Common myeloid progenitor, CD34-positive (primary cell): ENCODE measurements at regions of chrX and their contacts with region 1.

Region 1: GRCh38 chrX:129726307-129727111 is 12.3 kb upstream of the XPNPEP2 start:
- DNase-seq: peak in 2 of 3 donors; percentile 33 to 38
- H3K4me3 ChIP-seq: no peak overlapping the region
- H3K27ac ChIP-seq: no peak overlapping the region
- H3K4me1 ChIP-seq: peaks cover 0 to 17% (median 1%) of the 10 kb centered on the region in 4 experiments
- H3K27me3 ChIP-seq: no peaks in the 10 kb centered on the region

Region 2: DNA sequence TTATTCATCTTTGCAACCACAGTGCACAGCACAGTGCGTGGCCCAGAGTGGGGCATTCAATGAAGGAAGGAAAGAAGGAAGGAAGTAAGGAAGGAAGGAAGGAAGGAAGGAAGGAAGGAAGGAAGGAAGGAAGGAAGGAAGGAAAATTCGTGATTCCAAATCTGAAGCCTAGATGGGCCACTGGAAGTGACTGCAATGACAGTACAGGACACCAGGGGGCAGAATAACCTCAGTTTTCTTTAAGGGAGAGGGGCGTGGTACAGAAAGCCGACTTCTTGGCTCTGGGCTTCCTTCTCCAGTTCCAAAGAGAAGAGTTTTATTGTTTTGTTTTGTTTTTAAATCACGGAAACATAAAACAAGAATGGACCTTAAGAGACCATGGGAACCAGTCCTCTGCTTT is 119.6 kb before region 1 on chrX:
- CTCF ChIA-PET with region 1: interaction called, 19 read pairs
- POLR2A ChIA-PET with region 1: no interaction called
- DNase-seq: peak; percentile 58 to 87 (median 78)
- H3K4me3 ChIP-seq: no peak overlapping the region
- H3K27ac ChIP-seq: no peak overlapping the region
- H3K4me1 ChIP-seq: peaks cover 0 to 14% (median 12%) of the 10 kb centered on the region in 4 experiments
- H3K27me3 ChIP-seq: no peaks in the 10 kb centered on the region

Region 3: GRCh38 chrX:129637217-129638109 is 89.0 kb before region 1 on chrX:
- CTCF ChIA-PET with region 1: interaction called, 47 read pairs
- POLR2A ChIA-PET with region 1: no interaction called
- DNase-seq: peak; percentile 53 to 76 (median 67)
- H3K4me3 ChIP-seq: no peak overlapping the region
- H3K27ac ChIP-seq: no peak overlapping the region
- H3K4me1 ChIP-seq: peaks cover 0 to 8% (median 2%) of the 10 kb centered on the region in 4 experiments
- H3K27me3 ChIP-seq: no peaks in the 10 kb centered on the region

Region 4: DNA sequence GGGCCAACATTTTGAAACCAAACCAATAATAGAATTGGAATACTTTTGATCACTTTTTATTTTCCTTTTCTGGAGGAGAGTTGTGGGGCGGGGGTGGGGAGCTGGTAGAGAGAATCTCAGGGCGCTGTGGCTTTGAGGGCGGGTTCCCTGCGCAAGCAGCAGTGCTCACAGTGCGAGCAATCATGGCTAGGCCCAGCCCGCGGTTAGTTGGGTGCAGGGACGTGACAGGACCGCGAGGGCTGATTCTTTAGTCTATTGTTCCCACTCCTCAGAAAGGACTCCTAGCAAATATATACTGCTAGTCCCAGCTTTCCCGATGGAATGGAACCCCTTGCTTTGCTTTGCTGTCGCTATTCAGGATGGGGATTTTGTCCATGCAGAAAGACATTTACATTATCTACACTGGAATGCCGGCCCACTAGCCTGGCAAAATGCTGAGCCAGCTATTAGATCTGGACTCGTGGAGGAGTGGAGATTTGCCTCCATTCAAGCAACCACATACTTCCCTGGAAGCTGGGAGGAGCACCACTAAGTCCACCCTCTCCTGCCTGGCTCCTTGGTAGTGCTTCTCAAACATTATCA is 47.8 kb before region 1 on chrX:
- CTCF ChIA-PET with region 1: interaction called, 12 read pairs
- POLR2A ChIA-PET with region 1: no interaction called
- DNase-seq: peak in 2 of 3 donors; percentile 30 to 38
- H3K4me3 ChIP-seq: peak overlapping the region in 6 of 7 experiments; percentile 16 to 70 (median 49)
- H3K27ac ChIP-seq: no peak overlapping the region
- H3K4me1 ChIP-seq: peaks cover 0 to 13% (median 8%) of the 10 kb centered on the region in 4 experiments
- H3K27me3 ChIP-seq: no peaks in the 10 kb centered on the region

Region 5: DNA sequence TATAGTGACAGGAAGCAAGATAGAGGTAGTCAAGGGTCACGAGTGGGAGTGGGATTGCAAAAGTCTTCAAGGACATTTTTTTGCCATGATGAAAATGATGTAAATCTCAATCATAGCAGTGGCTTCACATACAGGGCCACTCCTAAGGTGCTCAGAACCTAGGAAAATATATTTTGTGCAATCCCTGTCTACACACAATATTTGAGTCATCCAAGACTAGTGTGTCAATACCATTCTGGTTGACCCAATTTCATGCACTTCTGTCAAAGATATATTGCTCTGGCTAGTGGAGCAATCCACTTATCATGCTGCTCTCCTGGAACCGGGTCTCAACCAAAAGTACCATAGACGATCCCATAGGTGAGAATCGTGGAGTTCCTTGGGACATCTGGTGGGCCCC is 11.9 kb before region 1 on chrX:
- CTCF ChIA-PET with region 1: interaction called, 12 read pairs
- POLR2A ChIA-PET with region 1: no interaction called
- DNase-seq: no peak
- H3K4me3 ChIP-seq: no peak overlapping the region
- H3K27ac ChIP-seq: no peak overlapping the region
- H3K4me1 ChIP-seq: no peaks in the 10 kb centered on the region
- H3K27me3 ChIP-seq: no peaks in the 10 kb centered on the region

Region 6: GRCh38 chrX:129737916-129738315 is 11.4 kb after region 1 on chrX:
- CTCF ChIA-PET with region 1: interaction called, 12 read pairs
- POLR2A ChIA-PET with region 1: no interaction called
- DNase-seq: peak in 2 of 3 donors; percentile 46 to 52
- H3K4me3 ChIP-seq: no peak overlapping the region
- H3K27ac ChIP-seq: no peak overlapping the region
- H3K4me1 ChIP-seq: peaks cover 2 to 38% (median 6%) of the 10 kb centered on the region in 4 experiments
- H3K27me3 ChIP-seq: no peaks in the 10 kb centered on the region

Region 7: DNA sequence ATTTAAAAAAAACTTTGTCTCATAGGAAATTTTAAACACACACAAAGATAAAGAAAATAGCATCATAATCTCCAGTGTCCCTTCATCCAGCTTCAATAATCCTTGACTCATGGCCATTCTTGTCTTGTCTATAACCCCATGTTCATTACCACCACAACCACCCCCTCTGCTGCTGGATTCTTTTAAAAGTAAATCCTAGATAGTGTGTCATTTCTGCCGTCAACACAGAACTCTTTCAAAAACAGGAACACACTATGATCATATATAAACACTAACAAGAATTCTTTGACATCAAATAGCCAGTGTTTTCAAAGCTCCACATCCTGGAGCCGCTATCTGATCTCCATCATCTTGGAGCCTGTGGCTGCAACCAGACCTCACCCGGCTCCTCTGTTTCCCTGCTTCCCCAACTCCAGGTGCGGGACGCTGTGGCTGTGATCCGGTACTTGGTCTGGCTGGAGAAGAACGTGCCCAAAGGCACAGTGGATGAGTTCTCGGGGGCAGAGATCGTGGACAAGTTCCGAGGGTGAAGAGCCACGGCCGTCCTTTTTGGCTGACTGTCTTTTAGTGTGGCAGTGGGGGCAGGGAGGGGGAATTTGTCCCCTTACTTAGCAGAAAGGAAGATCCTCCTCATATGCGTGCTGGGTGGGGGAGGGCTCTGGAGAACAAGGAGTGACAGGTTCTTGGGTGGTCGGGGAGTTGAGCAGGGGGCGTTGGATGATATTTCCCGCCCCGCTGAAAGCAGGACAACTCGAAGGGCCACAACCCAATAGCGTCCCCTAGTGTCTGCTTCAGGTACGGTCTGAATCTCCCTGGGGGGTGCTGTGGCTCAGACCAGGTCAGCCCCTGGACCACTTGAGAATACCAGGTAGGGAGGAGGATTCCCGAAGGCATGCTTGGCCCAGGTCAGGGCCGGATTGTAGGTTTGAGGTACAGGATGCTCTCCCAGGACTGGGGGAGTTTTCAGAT is 27.8 kb after region 1 on chrX:
- CTCF ChIA-PET with region 1: interaction called, 10 read pairs
- POLR2A ChIA-PET with region 1: no interaction called
- DNase-seq: peak in 2 of 3 donors; percentile 65 to 70
- H3K4me3 ChIP-seq: peak overlapping the region in 4 of 7 experiments; percentile 36 to 66 (median 44)
- H3K27ac ChIP-seq: no peak overlapping the region
- H3K4me1 ChIP-seq: peaks cover 4 to 46% (median 26%) of the 10 kb centered on the region in 4 experiments
- H3K27me3 ChIP-seq: no peaks in the 10 kb centered on the region